HEK293T (cell line): ENCODE measurements at regions of chr1 and their contacts with region 1.

Region 1: DNA sequence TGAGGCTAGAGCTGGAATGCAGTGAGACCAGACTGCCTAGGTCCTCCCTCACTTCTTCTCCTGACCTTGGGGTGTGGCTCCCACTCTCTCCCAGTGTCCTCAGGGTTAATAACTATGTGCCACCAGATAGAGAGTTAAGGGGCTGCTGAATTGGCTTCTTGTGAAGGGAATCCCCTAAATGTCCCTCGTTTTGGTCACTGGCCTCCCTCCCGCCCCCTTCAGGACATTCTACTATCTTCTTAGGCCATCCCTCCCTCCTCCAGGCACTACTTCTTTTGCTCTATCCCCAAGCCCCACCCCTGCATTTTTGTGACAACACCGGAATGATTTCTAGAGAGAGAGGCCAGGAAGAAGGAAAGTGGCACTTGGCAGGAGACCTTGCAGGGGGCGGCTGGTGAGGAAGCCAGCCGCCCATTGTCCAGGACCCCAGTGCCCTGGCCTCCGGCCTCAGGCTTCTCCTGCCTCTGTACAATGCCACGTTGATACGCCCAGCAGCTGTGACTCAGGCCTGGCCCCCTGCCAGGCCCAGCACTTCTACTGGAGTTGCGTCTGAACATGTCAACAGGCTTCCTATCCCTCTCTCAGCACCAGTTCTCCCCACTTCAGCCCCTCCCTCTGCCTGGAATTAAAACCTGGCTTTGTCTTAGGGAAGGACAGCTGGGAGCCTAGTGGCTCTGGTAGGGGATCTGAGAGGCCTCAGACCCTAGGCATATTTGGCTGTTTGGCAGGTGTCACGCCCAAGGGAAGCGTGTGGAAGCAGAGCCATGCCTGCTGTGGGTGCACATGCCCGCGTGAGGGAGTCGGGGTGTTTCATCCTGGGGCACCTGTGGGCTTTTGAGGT is 9.1 kb downstream of the LMNA start:
- DNase-seq: peak; percentile 68

Region 2: GRCh38 chr1:156054500-156055280 is 68.9 kb before region 1 on chr1 and contains the start of gene LAMTOR2:
- CTCF ChIA-PET with region 1: no interaction called
- POLR2A ChIA-PET with region 1: no interaction called
- DNase-seq: peak; percentile 97

Region 3: DNA sequence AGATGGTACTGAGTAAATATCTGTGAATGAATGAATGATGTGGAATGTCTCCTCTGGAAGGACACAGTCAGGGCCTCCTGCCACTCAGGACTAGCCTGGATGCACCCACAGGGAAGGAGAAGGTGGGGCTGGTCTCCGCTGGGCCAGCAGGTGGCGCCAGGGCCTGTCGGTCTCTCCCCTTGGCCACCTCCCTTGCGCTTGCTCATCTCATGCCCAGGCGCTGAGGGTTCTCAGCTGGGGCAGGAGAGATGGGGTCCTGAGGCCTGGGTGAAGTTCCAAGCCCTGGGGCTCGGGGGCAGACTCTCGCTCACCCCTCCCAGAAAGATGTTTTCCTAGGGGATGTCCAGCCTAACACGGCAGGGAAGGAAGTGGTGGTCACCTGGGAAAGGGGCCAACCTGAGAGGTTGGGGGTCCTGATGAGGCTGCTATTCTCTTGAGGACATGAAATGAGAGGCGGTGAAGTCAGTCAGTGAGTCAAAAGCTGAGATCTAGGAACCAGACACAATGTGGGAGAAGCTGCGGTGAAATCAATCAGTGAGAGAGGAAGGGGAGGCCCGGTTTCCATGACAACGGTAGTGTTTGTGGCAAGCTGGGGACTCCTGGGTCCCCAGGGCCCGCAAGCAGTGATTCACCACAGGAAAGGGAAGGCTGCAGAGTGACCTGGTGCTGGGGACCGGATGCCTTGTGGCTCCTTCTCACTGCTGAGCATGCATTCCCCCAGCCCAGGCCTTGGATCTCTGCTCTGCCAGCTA is 26.8 kb before region 1 on chr1:
- CTCF ChIA-PET with region 1: interaction called, 255 read pairs
- POLR2A ChIA-PET with region 1: interaction called, 32 read pairs
- DNase-seq: peak; percentile 92

Region 4: GRCh38 chr1:156104065-156104810 is 19.3 kb before region 1 on chr1:
- CTCF ChIA-PET with region 1: interaction called, 255 read pairs
- POLR2A ChIA-PET with region 1: interaction called, 32 read pairs
- DNase-seq: no peak